ENCODE measurements at regions of chrX and their contacts with region 1.

Region 1: DNA sequence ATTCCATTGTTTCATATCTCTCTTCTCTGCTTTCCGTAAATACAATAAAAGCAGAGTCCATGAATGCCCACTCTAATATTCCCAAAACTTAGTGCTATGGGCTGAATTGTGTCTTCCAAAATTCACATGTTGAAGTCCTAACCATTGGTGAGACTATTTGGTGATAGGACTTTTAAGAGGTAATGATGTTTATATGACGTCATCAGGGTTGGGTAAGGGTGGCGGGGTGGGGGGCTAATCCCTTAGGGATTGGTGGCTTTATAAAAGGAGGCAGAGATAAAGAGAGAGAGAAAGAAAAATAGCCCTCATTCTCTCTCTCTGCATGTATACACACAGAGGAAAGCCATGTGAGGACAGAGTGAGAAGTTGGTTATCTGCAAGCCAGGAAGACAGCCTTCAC is 722.2 kb downstream of the DMD start:
- DNase-seq: no peak
- H3K4me3 ChIP-seq: no peak overlapping the region
- H3K4me3 Mint-ChIP-seq: no peak overlapping the region
- H3K27ac Mint-ChIP-seq: no peak overlapping the region
- H3K4me1 ChIP-seq: no peaks in the 10 kb centered on the region
- H3K4me1 Mint-ChIP-seq: no peaks in the 10 kb centered on the region
- H3K27me3 ChIP-seq: no peaks in the 10 kb centered on the region
- H3K27me3 Mint-ChIP-seq: no peaks in the 10 kb centered on the region
- CTCF ChIP-seq: no peak

Region 2: DNA sequence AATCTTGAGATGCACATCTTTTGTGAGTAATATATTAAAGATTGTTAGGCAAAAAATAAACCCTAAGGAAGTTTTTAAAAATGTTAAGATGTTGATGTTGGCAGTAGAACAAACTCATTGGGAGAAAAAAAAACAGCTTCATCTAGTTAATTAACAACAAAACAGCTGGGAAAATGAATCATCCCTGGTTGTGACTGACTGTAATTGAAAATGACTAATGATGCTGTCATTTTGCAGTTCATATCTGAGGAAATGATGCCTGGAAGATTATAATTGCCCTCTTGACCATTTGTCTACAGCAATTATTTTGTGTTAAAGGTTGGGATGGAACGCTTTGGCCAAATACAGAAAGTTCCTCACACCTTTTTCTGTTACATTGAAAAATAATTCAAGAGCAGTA is 656.9 kb before region 1 on chrX:
- CTCF ChIA-PET with region 1: no interaction called
- POLR2A ChIA-PET with region 1: no interaction called
- intact Hi-C with region 1: no loop called
- DNase-seq: no peak
- H3K4me3 ChIP-seq: no peak overlapping the region
- H3K4me3 Mint-ChIP-seq: no peak overlapping the region
- H3K27ac Mint-ChIP-seq: no peak overlapping the region
- H3K4me1 ChIP-seq: no peaks in the 10 kb centered on the region
- H3K4me1 Mint-ChIP-seq: no peaks in the 10 kb centered on the region
- H3K27me3 ChIP-seq: no peaks in the 10 kb centered on the region
- H3K27me3 Mint-ChIP-seq: no peaks in the 10 kb centered on the region
- CTCF ChIP-seq: no peak

Region 3: GRCh38 chrX:31871992-31872391 is 617.1 kb before region 1 on chrX:
- CTCF ChIA-PET with region 1: no interaction called
- POLR2A ChIA-PET with region 1: no interaction called
- intact Hi-C with region 1: no loop called
- DNase-seq: no peak
- H3K4me3 ChIP-seq: no peak overlapping the region
- H3K4me3 Mint-ChIP-seq: no peak overlapping the region
- H3K27ac Mint-ChIP-seq: no peak overlapping the region
- H3K4me1 ChIP-seq: no peaks in the 10 kb centered on the region
- H3K4me1 Mint-ChIP-seq: peaks cover 13% of the 10 kb centered on the region
- H3K27me3 ChIP-seq: no peaks in the 10 kb centered on the region
- H3K27me3 Mint-ChIP-seq: no peaks in the 10 kb centered on the region
- CTCF ChIP-seq: no peak

Region 4: GRCh38 chrX:32370456-32371205 is 118.5 kb before region 1 on chrX:
- CTCF ChIA-PET with region 1: no interaction called
- POLR2A ChIA-PET with region 1: no interaction called
- intact Hi-C with region 1: no loop called
- DNase-seq: no peak
- H3K4me3 ChIP-seq: no peak overlapping the region
- H3K4me3 Mint-ChIP-seq: no peak overlapping the region
- H3K27ac Mint-ChIP-seq: no peak overlapping the region
- H3K4me1 ChIP-seq: no peaks in the 10 kb centered on the region
- H3K4me1 Mint-ChIP-seq: peaks cover 6% of the 10 kb centered on the region
- H3K27me3 ChIP-seq: no peaks in the 10 kb centered on the region
- H3K27me3 Mint-ChIP-seq: no peaks in the 10 kb centered on the region
- CTCF ChIP-seq: no peak

Region 5: GRCh38 chrX:32448320-32448719 is 40.8 kb before region 1 on chrX:
- CTCF ChIA-PET with region 1: no interaction called
- POLR2A ChIA-PET with region 1: no interaction called
- intact Hi-C with region 1: no loop called
- DNase-seq: no peak
- H3K4me3 ChIP-seq: no peak overlapping the region
- H3K4me3 Mint-ChIP-seq: no peak overlapping the region
- H3K27ac Mint-ChIP-seq: no peak overlapping the region
- H3K4me1 ChIP-seq: no peaks in the 10 kb centered on the region
- H3K4me1 Mint-ChIP-seq: no peaks in the 10 kb centered on the region
- H3K27me3 ChIP-seq: no peaks in the 10 kb centered on the region
- H3K27me3 Mint-ChIP-seq: no peaks in the 10 kb centered on the region
- CTCF ChIP-seq: no peak

Region 6: DNA sequence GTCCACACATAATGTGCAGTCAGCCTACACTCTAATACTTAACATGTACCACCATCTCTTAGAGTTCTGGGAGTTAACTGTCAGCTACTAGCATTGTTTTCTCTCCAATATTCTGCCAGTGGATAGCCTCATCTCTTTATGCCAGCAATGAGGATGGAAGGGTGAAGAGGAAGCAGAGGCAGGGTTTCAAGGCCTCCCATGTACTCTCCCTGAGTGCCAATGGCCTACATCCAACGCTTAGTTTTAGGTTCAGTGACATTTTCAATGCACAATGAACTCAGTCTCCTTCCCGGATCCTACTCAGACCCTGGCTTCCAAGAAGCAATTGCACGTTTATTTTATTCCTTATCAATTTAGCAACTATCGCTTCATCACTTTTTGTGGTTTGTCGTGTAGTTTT is 36.1 kb after region 1 on chrX:
- CTCF ChIA-PET with region 1: no interaction called
- POLR2A ChIA-PET with region 1: no interaction called
- intact Hi-C with region 1: loop called (anchors 5 kb)
- DNase-seq: no peak
- H3K4me3 ChIP-seq: no peak overlapping the region
- H3K4me3 Mint-ChIP-seq: no peak overlapping the region
- H3K27ac Mint-ChIP-seq: no peak overlapping the region
- H3K4me1 ChIP-seq: peaks cover 14% of the 10 kb centered on the region; the same call in 1 of the 2 replicates
- H3K4me1 Mint-ChIP-seq: peaks cover 10% of the 10 kb centered on the region
- H3K27me3 ChIP-seq: no peaks in the 10 kb centered on the region
- H3K27me3 Mint-ChIP-seq: no peaks in the 10 kb centered on the region
- CTCF ChIP-seq: no peak

Measured in Caco-2 (cell line).